AG04450 (cell line): ENCODE measurements at regions of chr3 and their contacts with region 1.

Region 1: DNA sequence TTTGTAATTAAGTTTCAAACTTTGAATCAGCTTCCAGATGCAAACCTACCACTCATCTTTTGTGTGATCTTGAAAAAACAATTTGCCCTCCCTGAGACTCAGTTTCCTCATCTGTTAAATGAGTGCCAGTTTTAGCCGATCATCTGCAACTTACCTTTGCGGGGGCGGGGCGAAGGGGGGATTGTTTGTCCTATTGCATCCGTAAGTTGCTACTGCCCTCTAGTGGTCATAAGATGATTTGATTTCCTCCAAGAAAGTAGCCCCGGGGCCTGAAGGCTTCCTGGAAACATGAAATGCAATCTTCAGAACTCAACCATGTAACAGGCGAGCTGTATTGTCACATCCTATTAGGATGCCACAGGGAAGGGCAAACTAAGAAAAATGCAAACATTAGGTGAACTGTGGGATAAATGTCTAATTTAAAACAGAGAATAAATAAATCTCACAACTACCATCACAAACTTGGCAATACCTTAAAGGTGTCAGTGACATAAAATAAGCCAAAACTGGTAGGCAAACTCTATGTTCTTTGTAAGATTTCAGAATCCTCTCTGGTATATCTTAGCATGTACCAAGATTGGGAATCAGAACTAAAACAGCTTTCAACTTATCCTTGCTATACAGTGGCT is 63.5 kb upstream of the CLDN18 start:
- DNase-seq: peak; percentile 24
- H3K4me3 ChIP-seq: no peak overlapping the region
- H3K27ac ChIP-seq: no peak overlapping the region
- H3K27me3 ChIP-seq: no peaks in the 10 kb centered on the region
- CTCF ChIP-seq: peak; percentile 74

Region 2: GRCh38 chr3:136120373-136121348 is 1825.8 kb before region 1 on chr3:
- CTCF ChIA-PET with region 1: no interaction called
- POLR2A ChIA-PET with region 1: no interaction called
- DNase-seq: no peak
- H3K4me3 ChIP-seq: no peak overlapping the region
- H3K27ac ChIP-seq: no peak overlapping the region
- H3K27me3 ChIP-seq: no peaks in the 10 kb centered on the region
- CTCF ChIP-seq: no peak

Region 3: GRCh38 chr3:137105277-137105977 is 841.0 kb before region 1 on chr3:
- CTCF ChIA-PET with region 1: interaction called, 57 read pairs
- POLR2A ChIA-PET with region 1: no interaction called
- DNase-seq: peak; percentile 30
- H3K4me3 ChIP-seq: no peak overlapping the region
- H3K27ac ChIP-seq: no peak overlapping the region
- H3K27me3 ChIP-seq: peaks cover 8% of the 10 kb centered on the region
- CTCF ChIP-seq: peak; percentile 71

Region 4: GRCh38 chr3:137110484-137110883 is 836.0 kb before region 1 on chr3:
- CTCF ChIA-PET with region 1: interaction called, 57 read pairs
- POLR2A ChIA-PET with region 1: no interaction called
- DNase-seq: no peak
- H3K4me3 ChIP-seq: no peak overlapping the region
- H3K27ac ChIP-seq: no peak overlapping the region
- H3K27me3 ChIP-seq: peaks cover 8% of the 10 kb centered on the region
- CTCF ChIP-seq: peak; percentile 88

Region 5: DNA sequence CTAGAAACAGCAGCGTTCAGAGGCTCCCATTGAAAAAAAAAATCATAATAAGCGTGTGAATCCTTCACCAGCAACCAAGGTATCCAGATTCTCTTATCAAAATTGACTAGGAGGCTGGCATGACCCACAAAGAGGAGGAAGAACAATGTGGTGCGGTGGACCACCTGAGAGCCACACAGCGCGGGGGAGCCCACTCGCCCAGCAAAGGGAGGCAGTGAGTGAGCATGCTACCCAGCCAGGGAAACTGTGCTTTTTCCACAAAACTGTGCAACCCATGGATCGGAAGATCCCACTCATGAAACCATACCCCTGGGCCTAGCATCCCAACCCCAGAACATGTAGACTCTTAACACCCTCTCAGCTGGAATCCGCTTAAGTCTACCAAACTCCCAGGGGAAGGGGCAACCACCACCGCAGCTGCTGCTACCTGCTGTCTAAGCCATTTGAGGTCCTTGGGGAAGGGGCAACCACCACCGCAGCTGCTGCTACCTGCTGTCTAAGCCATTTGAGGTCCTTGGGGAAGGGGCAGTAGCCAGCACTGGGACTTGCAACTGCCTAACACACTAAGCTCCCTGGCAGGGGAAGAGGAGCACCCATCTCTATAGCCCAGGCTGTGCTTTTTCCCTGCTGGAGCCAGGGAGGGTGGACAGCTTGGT is 39.3 kb before region 1 on chr3:
- CTCF ChIA-PET with region 1: no interaction called
- POLR2A ChIA-PET with region 1: no interaction called
- DNase-seq: no peak
- H3K4me3 ChIP-seq: no peak overlapping the region
- H3K27ac ChIP-seq: no peak overlapping the region
- H3K27me3 ChIP-seq: no peaks in the 10 kb centered on the region
- CTCF ChIP-seq: no peak

Region 6: GRCh38 chr3:137963473-137963872 is 17.0 kb after region 1 on chr3:
- CTCF ChIA-PET with region 1: interaction called, 12 read pairs
- POLR2A ChIA-PET with region 1: no interaction called
- DNase-seq: no peak
- H3K4me3 ChIP-seq: no peak overlapping the region
- H3K27ac ChIP-seq: no peak overlapping the region
- H3K27me3 ChIP-seq: peaks cover 5% of the 10 kb centered on the region
- CTCF ChIP-seq: no peak

Region 7: GRCh38 chr3:137970914-137971831 is 24.7 kb after region 1 on chr3:
- CTCF ChIA-PET with region 1: interaction called, 12 read pairs
- POLR2A ChIA-PET with region 1: no interaction called
- DNase-seq: peak; percentile 20
- H3K4me3 ChIP-seq: no peak overlapping the region
- H3K27ac ChIP-seq: no peak overlapping the region
- H3K27me3 ChIP-seq: peaks cover 8% of the 10 kb centered on the region
- CTCF ChIP-seq: peak; percentile 94